ENCODE measurements at regions of chr2 and their contacts with region 1.

Region 1: DNA sequence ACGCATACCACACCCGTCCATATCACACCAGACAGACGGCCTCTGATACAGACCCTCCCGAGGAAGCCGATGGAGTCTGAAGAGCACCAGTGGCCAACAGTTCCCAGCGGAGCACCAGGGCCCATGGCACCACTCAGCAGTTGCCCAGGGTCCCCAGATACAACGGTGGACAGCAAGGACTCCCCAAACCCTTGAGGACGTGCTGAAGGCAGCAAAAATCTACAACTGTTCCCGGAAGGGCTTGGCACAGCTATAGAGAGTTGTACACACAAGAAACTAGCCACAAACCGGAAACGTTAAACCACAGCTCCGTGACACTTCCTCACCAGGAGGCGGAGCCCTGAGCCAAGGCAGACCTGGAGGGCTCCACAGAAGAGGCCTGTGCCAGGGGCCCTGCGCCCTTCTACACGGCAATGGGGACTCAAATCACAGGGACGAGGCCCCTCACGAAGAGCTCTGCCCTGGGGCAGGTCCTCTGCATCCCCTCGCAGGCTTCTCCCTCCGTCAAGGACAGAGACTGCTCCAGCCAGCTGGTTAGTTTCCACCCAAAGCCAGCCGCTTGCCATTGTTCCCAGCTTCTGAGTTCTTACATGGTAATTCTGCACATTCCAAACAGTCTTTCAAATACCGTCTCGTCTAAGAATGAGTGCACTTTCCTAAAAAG is 133.4 kb downstream of the HDAC4 start:
- DNase-seq: peak; percentile 85
- ATAC-seq: peak; percentile 77
- H3K4me3 Mint-ChIP-seq: peak overlapping the region; percentile 90
- H3K27ac Mint-ChIP-seq: peak overlapping the region; percentile 97
- H3K4me1 Mint-ChIP-seq: peaks cover 62% of the 10 kb centered on the region
- H3K27me3 Mint-ChIP-seq: no peaks in the 10 kb centered on the region

Region 2: DNA sequence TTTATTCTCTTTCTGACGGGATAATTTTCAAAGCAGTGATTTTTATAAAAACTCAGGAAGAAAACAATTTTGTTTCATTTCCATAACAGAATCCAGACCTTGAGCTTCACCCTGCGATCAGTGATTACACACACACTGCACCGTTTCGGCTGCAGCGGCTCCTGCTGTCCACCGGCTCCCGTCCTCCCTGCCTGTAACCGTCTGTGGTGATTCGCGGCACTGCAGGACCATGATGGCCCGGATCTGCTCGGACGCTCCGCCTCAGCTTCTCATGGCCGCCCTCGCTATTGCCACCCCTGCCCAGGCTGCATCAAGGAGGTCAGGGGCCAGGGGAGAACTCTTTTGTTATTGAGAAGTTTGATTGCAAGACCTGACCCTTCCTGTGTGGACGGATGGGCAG is 173.5 kb before region 1 on chr2:
- POLR2A ChIA-PET with region 1: no interaction called
- DNase-seq: no peak
- ATAC-seq: no peak
- H3K4me3 Mint-ChIP-seq: no peak overlapping the region
- H3K27ac Mint-ChIP-seq: no peak overlapping the region
- H3K4me1 Mint-ChIP-seq: peaks cover 4% of the 10 kb centered on the region
- H3K27me3 Mint-ChIP-seq: no peaks in the 10 kb centered on the region

Region 3: GRCh38 chr2:239201531-239201876 is 65.9 kb before region 1 on chr2:
- POLR2A ChIA-PET with region 1: no interaction called
- DNase-seq: no peak
- ATAC-seq: no peak
- H3K4me3 Mint-ChIP-seq: no peak overlapping the region
- H3K27ac Mint-ChIP-seq: no peak overlapping the region
- H3K4me1 Mint-ChIP-seq: peaks cover 20% of the 10 kb centered on the region
- H3K27me3 Mint-ChIP-seq: no peaks in the 10 kb centered on the region

Region 4: GRCh38 chr2:239288951-239289511 is 21.6 kb after region 1 on chr2:
- POLR2A ChIA-PET with region 1: interaction called, 25 read pairs
- DNase-seq: peak; percentile 60
- ATAC-seq: peak; percentile 57
- H3K4me3 Mint-ChIP-seq: peak overlapping the region; percentile 88
- H3K27ac Mint-ChIP-seq: peak overlapping the region; percentile 99
- H3K4me1 Mint-ChIP-seq: peaks cover 62% of the 10 kb centered on the region
- H3K27me3 Mint-ChIP-seq: no peaks in the 10 kb centered on the region

Region 5: GRCh38 chr2:239298116-239298804 is 30.8 kb after region 1 on chr2:
- POLR2A ChIA-PET with region 1: interaction called, 25 read pairs
- DNase-seq: peak; percentile 75
- ATAC-seq: peak; percentile 93
- H3K4me3 Mint-ChIP-seq: peak overlapping the region; percentile 88
- H3K27ac Mint-ChIP-seq: peak overlapping the region; percentile 95
- H3K4me1 Mint-ChIP-seq: peaks cover 51% of the 10 kb centered on the region
- H3K27me3 Mint-ChIP-seq: no peaks in the 10 kb centered on the region

Region 6: DNA sequence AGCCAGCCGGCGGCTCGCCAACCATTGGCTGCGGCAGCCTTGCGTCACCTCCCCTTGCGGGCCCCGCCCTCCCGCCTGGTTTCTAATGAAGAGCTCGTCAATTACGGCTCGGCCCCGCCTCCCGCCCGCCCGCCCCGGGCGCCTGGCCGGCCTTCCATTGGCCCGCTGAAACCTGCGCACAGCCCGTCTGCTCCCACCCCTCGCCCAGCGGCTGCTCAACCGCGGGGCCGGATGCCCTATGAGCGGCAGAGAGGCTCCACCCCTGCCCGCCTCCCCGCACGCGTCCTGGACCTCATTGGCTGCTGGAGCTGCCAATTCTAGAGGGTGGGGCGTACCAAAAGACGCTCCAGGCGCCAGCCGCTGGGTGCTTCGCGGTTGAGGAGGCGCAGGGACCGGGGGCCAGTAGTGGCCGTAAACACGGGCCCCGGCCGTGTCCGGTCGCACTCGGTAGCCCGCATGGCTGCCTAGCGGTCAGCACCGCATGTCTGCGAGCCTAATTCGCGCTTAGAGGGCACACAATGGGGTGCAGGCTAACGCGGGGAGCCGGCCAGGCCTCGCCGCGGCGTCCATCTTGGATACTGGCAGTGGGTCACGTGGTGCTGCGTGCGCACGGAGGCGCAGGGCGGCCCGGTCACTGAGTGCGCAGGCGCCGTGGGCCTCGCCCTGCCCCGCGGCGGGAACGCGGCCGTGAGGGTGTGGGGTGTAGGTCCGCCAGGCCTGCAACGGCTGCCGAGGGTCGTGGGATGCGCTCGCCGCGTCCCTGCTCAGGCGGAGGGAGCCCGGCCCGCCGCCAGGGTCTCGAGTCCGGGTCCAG is 133.9 kb after region 1 on chr2:
- POLR2A ChIA-PET with region 1: interaction called, 17 read pairs
- DNase-seq: peak; percentile 99
- ATAC-seq: peak; percentile 93
- H3K4me3 Mint-ChIP-seq: peak overlapping the region; percentile 90
- H3K27ac Mint-ChIP-seq: peak overlapping the region; percentile 94
- H3K4me1 Mint-ChIP-seq: peaks cover 29% of the 10 kb centered on the region
- H3K27me3 Mint-ChIP-seq: peaks cover 6% of the 10 kb centered on the region